Ovary (tissue), 10 donors: ENCODE measurements at regions of chr11 and their contacts with region 1.

Region 1: DNA sequence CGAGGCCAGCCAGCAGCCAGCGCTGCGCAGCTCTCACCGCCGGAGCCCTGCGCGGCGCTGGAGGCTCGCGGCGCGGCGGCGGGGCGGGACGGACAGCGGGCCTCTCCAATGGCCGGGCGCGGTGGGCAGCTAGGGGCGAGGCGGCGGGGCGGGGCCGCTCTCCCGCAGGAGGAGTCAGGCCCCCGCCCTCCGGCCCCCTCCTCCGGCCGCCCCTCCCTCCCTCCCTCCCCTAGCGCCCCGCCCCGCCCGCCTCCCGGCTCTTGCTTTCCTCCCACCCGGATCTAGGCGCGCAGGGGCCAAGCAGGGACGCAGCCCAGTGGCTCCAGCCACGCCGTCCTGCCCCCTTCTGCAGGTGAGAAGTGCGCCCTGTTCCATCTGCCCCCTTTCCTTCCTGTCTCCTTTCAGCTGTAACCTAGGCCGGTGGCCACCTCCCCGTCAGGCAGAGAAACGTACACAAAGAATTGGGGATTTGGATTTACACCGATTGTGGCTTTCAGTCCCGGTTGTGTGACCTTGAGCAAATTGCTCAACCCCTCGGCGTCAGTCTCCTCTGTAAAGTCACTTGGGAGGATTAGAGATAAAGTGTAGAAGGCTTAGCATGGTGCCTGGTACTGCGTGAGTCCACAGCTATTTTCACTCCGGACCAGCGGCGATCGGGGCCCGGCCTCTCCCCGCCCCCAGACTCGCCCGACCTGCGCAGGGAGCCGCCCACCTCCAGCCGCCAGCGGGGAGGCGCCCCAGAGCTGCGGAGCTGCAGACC is at the start of gene FZD4:
- DNase-seq: peak; percentile 92 to 96 (median 93)
- H3K4me3 ChIP-seq: peak within 1 kb of the TSS; percentile 99
- H3K27ac ChIP-seq: peak within 1 kb of the TSS; percentile 64 to 91
- H3K4me1 ChIP-seq: peaks cover 11% of the 10 kb centered on the region
- H3K27me3 ChIP-seq: no peaks in the 10 kb centered on the region
- CTCF ChIP-seq: peak in 2 of 3 donors; percentile 18 to 32
- EP300 ChIP-seq: no peak
- POLR2A ChIP-seq: peak; percentile 79
- total RNA-seq, gene FZD4: 14.0 to 30.7 (median 23.3) TPM

Region 2: DNA sequence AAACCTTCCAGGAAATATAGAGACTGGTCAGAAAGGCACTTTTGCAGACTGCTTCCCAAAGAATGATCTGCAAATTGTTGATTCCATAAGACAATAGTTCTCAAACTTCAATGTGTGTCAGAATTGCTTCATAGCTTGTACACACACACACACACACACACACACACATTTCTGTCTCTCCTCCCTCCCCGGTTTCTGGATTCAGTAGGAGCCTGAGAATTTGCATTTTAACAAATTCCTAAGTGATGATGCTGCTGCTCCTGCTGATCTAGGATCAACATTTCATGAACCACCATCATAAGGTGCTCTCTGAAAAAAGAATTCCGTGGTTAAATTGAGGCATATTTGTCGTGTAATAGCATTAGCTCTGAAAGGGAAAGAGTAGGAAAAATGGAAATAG is 35.0 kb after region 1 on chr11:
- intact Hi-C with region 1: no loop called
- DNase-seq: no peak
- H3K4me3 ChIP-seq: no peak overlapping the region
- H3K27ac ChIP-seq: no peak overlapping the region
- H3K4me1 ChIP-seq: peaks cover 6% of the 10 kb centered on the region
- H3K27me3 ChIP-seq: no peaks in the 10 kb centered on the region
- CTCF ChIP-seq: no peak
- EP300 ChIP-seq: no peak
- POLR2A ChIP-seq: no peak

Region 3: GRCh38 chr11:87037450-87038234 is 82.1 kb after region 1 on chr11 and contains the start of gene TMEM135:
- intact Hi-C with region 1: loop called in 2 of 4 experiments (anchors 5 to 10 kb)
- DNase-seq: peak; percentile 90 to 94 (median 93)
- H3K4me3 ChIP-seq: peak within 1 kb of the TSS; percentile 76
- H3K27ac ChIP-seq: peak within 1 kb of the TSS; percentile 82 to 88
- H3K4me1 ChIP-seq: peaks cover 6% of the 10 kb centered on the region
- H3K27me3 ChIP-seq: no peaks in the 10 kb centered on the region
- CTCF ChIP-seq: no peak
- EP300 ChIP-seq: no peak
- POLR2A ChIP-seq: peak; percentile 37
- total RNA-seq, gene TMEM135: 16.0 to 24.2 (median 20.1) TPM

Region 4: DNA sequence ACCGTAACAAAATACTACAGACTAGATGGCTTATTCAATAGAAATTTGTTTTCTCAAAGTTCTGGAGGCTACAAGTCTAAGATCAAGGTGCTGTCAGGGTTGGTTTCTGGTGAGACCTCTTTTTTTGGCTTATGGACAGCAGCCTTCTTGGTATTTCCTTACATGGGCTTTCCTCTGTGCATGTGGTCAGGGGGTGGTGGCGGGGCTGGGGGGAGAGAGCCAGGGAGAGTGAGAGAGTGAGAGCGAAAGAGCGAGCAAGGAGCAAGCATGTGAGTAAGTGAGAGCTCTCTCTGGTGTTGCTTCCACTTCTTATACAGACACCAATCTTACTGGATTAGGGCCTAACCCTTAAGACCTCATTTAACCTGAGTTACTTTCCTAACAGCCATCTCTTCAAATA is 263.7 kb after region 1 on chr11:
- intact Hi-C with region 1: no loop called
- DNase-seq: no peak
- H3K4me3 ChIP-seq: no peak overlapping the region
- H3K27ac ChIP-seq: no peak overlapping the region
- H3K4me1 ChIP-seq: no peaks in the 10 kb centered on the region
- H3K27me3 ChIP-seq: no peaks in the 10 kb centered on the region
- CTCF ChIP-seq: no peak
- EP300 ChIP-seq: no peak
- POLR2A ChIP-seq: no peak